Activated CD4-positive, alpha-beta T cell treated with anti-CD3 and anti-CD28 coated beads for 36 hours (primary cell): ENCODE measurements at regions of chr1 and their contacts with region 1.

Region 1: GRCh38 chr1:171420810-171421209 is 64.5 kb upstream of the PRRC2C start:
- DNase-seq: no peak
- ATAC-seq: peak; percentile 89
- H3K4me3 Mint-ChIP-seq: no peak overlapping the region
- H3K27ac Mint-ChIP-seq: peak overlapping the region; percentile 79
- H3K4me1 Mint-ChIP-seq: peaks cover 23% of the 10 kb centered on the region
- H3K27me3 Mint-ChIP-seq: no peaks in the 10 kb centered on the region

Region 2: DNA sequence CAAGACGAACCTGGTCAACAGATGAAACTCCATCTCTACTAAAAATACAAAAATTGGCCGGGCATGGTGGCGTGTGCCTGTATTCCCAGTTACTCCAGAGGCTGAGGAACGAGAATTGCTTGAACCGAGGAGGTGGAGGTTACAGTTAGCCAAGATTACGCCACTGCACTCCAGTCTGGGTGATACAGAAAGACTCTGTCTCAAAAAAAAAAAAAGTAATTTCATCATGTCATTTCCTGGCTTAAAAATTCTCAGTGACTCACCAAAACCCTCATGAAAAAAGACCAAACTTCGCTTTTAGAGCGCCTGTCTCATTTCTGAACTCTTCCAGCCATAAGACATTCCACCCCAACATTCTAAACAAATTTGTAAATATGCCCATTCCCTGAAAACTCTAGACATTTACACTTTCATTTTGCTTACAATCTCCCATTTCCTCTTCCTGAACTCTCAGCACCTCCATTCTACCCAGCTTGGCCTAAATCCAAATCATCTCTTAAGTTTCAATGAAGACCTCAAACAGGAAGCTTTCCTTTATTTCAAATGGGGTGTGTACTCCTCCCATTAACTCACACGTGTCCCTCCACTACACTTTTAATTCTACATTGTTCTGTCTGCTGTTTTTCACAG is 14.0 kb after region 1 on chr1:
- CTCF ChIA-PET with region 1: no interaction called
- POLR2A ChIA-PET with region 1: no interaction called
- intact Hi-C with region 1: loop called in 1 of 2 experiments (anchors 1 kb)
- DNase-seq: peak; percentile 21
- ATAC-seq: peak; percentile 82
- H3K4me3 Mint-ChIP-seq: peak overlapping the region; percentile 0
- H3K27ac Mint-ChIP-seq: peak overlapping the region; percentile 81
- H3K4me1 Mint-ChIP-seq: peaks cover 14% of the 10 kb centered on the region
- H3K27me3 Mint-ChIP-seq: no peaks in the 10 kb centered on the region